ENCODE measurements at regions of chr15 and their contacts with region 1.

Region 1: DNA sequence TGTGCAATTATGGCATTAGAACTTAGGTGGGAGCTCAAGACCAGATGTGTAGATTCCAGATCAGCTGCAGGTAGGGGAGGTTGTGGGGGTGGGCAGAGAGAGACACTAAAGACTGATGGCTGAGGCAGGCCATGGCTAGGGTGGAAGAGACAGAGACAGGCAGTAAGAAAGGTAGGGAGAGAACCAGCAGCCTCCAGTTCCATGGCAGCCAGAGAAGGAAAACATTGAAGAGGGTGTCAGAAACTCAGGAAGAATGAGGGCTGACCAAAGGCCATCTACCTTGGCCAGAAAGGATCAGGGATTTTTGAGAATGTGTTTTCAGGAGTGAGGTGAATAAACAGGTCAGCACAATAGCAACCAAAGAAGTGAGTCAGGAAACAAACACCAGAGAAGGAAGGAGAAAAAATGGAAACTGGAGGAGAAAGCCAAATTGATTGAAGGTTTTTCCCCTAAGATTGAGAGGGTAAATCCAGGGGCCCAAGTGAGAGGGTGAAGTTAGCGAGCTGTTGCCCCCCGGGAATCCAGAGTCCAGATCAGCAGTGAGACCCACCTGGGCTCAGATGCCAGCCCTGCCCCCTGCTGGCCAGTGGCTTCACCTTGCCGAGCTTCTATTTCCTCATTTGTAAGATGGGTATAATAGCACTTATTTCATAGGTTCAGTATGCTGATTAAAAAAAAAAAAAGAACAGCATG is 41.0 kb downstream of the ABHD2 start:
- DNase-seq: peak; percentile 56
- H3K4me3 Mint-ChIP-seq: no peak overlapping the region
- H3K27ac Mint-ChIP-seq: no peak overlapping the region
- H3K4me1 Mint-ChIP-seq: peaks cover 37% of the 10 kb centered on the region
- H3K27me3 Mint-ChIP-seq: no peaks in the 10 kb centered on the region

Region 2: DNA sequence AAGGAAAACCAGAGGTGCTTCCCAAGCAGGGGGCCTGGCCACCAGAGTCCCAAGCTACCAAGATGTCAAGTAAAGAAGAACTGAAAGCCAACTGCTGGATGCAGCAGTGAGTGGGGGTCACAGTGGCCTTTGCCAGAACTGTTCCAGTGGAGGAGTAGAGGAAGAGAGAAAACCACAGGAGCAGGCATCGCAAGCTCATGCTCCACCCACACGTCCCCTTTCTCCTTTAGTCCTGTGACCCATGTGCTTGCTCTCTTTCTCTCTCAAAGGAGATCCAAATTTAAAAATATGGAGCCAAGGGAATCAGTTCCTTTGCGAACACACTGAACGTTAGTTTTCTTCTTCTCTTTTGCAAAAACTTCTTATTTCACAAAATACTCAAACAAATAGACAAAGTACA is 53.4 kb before region 1 on chr15:
- CTCF ChIA-PET with region 1: no interaction called
- POLR2A ChIA-PET with region 1: no interaction called
- DNase-seq: no peak
- H3K4me3 Mint-ChIP-seq: no peak overlapping the region
- H3K27ac Mint-ChIP-seq: no peak overlapping the region
- H3K4me1 Mint-ChIP-seq: peaks cover 5% of the 10 kb centered on the region
- H3K27me3 Mint-ChIP-seq: peaks cover 18% of the 10 kb centered on the region

Region 3: GRCh38 chr15:89112341-89112971 is 16.8 kb before region 1 on chr15:
- CTCF ChIA-PET with region 1: interaction called, 10 read pairs
- POLR2A ChIA-PET with region 1: interaction called, 5 read pairs
- DNase-seq: peak; percentile 34
- H3K4me3 Mint-ChIP-seq: no peak overlapping the region
- H3K27ac Mint-ChIP-seq: peak overlapping the region; percentile 37
- H3K4me1 Mint-ChIP-seq: peaks cover 19% of the 10 kb centered on the region
- H3K27me3 Mint-ChIP-seq: no peaks in the 10 kb centered on the region

Region 4: GRCh38 chr15:89143503-89144162 is 14.4 kb after region 1 on chr15:
- CTCF ChIA-PET with region 1: interaction called, 10 read pairs
- POLR2A ChIA-PET with region 1: interaction called, 4 read pairs
- DNase-seq: no peak
- H3K4me3 Mint-ChIP-seq: no peak overlapping the region
- H3K27ac Mint-ChIP-seq: no peak overlapping the region
- H3K4me1 Mint-ChIP-seq: peaks cover 38% of the 10 kb centered on the region
- H3K27me3 Mint-ChIP-seq: no peaks in the 10 kb centered on the region

Region 5: GRCh38 chr15:89171136-89172072 is 42.1 kb after region 1 on chr15:
- CTCF ChIA-PET with region 1: interaction called, 10 read pairs
- POLR2A ChIA-PET with region 1: interaction called, 3 read pairs
- DNase-seq: peak; percentile 39
- H3K4me3 Mint-ChIP-seq: no peak overlapping the region
- H3K27ac Mint-ChIP-seq: no peak overlapping the region
- H3K4me1 Mint-ChIP-seq: peaks cover 13% of the 10 kb centered on the region
- H3K27me3 Mint-ChIP-seq: no peaks in the 10 kb centered on the region

Region 6: DNA sequence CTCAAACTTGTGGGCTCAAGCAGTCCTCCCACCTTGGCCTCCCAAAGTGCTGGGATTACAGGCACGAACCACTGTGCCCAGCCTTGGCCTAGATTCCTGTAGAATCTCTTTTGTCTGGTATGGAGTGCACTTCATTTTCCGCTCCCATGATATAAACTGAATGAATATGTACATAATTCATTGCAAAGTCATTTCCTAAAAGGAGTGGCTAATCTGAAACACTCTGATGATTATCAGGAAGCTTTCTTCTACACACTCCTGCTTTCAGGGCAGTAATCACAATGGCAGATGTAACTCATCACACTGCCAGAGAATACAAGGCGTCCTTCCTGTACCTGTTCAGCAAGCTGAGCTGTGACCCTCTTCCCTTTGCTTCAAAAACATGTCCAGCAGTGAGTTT is 63.5 kb after region 1 on chr15:
- CTCF ChIA-PET with region 1: no interaction called
- POLR2A ChIA-PET with region 1: no interaction called
- DNase-seq: no peak
- H3K4me3 Mint-ChIP-seq: no peak overlapping the region
- H3K27ac Mint-ChIP-seq: no peak overlapping the region
- H3K4me1 Mint-ChIP-seq: peaks cover 26% of the 10 kb centered on the region
- H3K27me3 Mint-ChIP-seq: no peaks in the 10 kb centered on the region